G401 (cell line): ENCODE measurements at regions of chr4 and their contacts with region 1.

Region 1: DNA sequence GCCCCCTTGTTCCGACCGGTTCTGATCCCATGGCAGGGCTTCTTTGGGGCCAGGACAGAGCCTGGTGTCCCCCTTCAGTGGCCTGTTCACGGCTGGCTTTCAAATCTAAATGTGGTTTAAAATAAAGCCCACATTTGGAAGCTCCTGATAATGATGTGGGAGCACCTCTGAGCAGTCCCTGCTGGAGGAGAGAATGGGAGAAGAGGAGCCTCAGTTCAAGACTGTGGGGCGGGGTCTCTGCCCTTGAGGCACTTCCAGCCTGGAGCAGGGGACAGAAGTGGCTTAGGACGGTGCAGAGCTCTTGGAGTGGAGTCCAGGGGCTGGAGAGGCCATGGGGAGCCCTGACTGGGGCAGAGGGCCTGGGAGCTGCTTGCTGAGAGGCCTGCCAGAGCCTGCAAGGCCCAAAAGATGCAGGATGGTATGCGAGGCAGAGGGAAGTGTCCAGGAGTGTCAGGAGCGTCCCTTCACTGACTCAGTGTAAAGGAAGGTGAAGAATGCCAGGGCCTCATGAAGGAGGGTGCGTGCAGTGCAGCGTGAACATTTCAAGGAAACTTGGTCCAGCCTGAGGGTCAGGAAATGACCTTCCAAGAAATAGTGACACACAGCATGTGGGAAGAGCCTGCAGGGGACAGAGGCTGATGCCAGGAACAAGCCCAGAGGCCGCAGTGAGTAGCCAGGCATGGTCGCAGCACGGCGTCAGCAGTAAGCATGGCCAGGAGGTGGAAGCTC is 21.1 kb upstream of the TADA2B start:
- DNase-seq: no peak

Region 2: DNA sequence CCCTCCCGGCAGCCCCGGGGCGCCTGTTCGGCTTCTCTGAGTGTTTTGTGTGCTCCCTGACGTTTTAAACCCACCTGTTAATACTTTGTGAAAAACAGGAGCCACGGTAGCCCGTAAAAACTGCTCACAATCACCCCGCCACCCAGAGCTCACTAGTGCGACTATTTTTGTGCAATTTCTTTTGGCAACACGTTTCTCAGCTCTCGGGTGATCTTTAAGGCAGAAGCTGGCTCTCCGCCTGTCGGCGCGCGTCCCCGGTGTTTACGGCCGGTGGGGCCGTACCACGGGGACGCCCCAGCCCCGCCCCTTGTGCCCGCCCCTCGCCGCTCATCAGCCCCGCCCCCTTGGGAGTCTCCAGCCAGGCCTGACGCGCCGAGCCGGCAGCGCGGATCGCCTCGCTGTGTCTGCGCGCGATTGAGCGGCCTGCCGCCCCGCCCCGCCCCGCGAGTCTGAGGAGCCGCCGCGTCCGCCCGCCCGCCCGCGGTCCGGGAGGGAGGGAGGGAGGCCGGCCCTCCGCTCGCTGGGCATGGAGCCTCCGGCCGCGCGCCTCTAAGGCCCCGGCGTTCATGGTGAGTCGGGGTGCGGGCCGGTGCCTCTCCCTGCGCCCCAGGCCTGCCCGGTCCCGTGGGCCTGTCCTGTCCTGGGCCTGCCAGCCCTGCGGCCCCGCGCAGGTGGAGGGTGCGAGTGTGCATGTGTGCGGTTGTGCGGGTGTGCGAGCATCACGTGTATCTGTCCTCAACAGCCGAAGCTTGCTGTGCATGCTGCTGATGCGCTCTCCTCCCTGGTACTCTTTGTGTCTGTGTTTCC is 35.1 kb before region 1 on chr4:
- in situ Hi-C with region 1: loop called (anchors 5 kb)
- DNase-seq: peak; percentile 95